ENCODE measurements at regions of chr1 and their contacts with region 1.

Region 1: DNA sequence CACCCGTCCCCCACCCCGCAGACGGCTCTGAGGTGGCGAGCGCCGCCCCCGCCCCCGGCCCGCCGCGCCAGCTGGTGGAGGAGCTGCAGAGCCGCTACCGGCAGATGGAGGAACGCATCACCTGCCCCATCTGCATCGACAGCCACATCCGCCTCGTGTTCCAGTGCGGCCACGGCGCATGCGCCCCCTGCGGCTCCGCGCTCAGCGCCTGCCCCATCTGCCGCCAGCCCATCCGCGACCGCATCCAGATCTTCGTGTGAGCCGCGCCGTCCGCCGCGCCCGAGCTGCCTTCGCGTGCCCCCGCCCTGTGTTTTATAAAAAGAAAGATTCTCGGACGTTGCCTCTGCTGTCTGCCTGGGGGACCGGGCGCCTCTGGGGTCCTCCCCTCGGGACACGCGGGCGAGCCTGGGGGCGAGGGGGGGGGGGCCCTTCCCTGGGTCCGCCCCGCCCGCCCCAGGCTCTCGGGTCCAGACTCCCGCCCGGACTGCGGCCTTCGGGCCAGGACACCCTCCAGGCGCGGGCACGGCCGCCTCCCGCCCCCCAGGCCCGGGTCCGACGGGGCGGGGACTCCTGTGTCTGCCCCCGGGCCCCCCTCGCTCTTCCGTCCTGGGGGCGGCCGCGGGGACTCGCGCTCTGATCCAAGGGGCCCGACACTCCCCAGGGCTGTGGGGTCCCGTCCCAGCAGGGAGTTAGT is 1.6 kb upstream of the MMP23B start:
- DNase-seq: peak; percentile 90 to 97 (median 96)
- ATAC-seq: peak; percentile 76
- H3K4me3 ChIP-seq: peak overlapping the region; percentile 17
- H3K4me3 Mint-ChIP-seq: peak overlapping the region; percentile 85 to 95 (median 90)
- H3K27ac ChIP-seq: peak overlapping the region; percentile 68
- H3K27ac Mint-ChIP-seq: peak overlapping the region; percentile 83 to 98 (median 95)
- H3K4me1 ChIP-seq: peaks cover 0 to 4% of the 10 kb centered on the region in 2 donors
- H3K4me1 Mint-ChIP-seq: peaks cover 0 to 11% (median 4%) of the 10 kb centered on the region in 7 donors
- H3K27me3 ChIP-seq: no peaks in the 10 kb centered on the region
- H3K27me3 Mint-ChIP-seq: peaks cover 0 to 5% (median 0%) of the 10 kb centered on the region in 5 donors

Region 2: DNA sequence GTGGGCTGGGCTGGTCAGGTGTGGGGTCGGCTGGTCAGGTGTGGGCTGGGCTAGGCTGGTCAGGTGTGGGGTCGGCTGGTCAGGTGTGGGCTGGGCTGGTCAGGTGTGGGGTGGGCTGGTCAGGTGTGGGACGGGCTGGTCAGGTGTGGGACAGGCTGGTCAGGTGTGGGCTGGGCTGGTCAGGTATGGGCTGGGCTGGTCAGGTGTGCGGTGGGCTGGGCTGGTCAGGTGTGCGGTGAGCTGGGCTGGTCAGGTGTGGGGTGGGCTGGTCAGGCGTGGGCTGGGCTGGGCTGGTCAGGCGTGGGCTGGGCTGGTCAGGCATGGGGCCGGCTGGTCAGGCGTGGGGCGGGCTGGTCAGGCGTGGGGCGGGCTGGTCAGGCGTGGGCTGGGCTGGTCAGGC is 24.2 kb before region 1 on chr1:
- CTCF ChIA-PET with region 1: no interaction called
- POLR2A ChIA-PET with region 1: interaction called, 15 read pairs
- intact Hi-C with region 1: no loop called
- DNase-seq: peak in 1 of 9 donors; percentile 8
- ATAC-seq: no peak
- H3K4me3 ChIP-seq: no peak overlapping the region
- H3K4me3 Mint-ChIP-seq: no peak overlapping the region
- H3K27ac ChIP-seq: peak overlapping the region; percentile 74
- H3K27ac Mint-ChIP-seq: peak overlapping the region in 2 of 9 donors; percentile 92 to 98
- H3K4me1 ChIP-seq: peaks cover 0 to 13% of the 10 kb centered on the region in 2 donors
- H3K4me1 Mint-ChIP-seq: peaks cover 8 to 20% (median 14%) of the 10 kb centered on the region in 7 donors
- H3K27me3 ChIP-seq: no peaks in the 10 kb centered on the region
- H3K27me3 Mint-ChIP-seq: no peaks in the 10 kb centered on the region